Adrenal gland (tissue), 19 donors: ENCODE measurements at regions of chr5 and their contacts with region 1.

Region 1: DNA sequence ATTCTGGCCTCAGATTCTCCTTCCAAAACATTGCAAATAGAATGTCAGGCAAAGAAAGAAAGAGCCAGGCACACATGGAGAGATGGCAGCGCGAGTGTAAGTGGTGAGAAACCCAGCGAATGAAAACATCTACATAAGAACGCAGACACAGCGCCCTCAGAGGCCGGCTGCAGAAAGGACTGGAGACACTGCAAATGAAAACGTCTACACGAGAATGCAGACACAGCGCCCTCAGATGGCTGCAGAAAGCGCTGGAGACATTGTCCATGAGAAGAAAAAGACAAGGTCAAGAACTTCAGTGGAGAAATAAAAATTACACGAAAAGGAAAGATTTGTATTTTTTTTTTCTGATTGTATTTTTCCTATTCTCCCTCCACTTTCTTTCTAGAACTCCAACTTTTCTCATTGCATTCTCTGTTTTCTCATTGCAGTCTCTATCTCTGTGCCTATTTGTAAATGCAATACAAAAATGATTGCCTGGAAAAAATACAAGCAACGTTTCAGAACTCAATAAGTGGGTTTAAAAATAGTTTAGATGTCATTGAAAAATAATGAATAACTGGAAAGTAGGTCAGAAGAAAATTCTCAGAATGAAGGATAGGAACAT is 117.9 kb upstream of the LPCAT1 start:
- DNase-seq: peak; percentile 81 to 97 (median 92)
- H3K4me3 ChIP-seq: no peak overlapping the region
- H3K27ac ChIP-seq: no peak overlapping the region
- H3K4me1 ChIP-seq: no peaks in the 10 kb centered on the region
- H3K27me3 ChIP-seq: peaks cover 20% of the 10 kb centered on the region
- CTCF ChIP-seq: peak; percentile 80 to 98 (median 90)
- POLR2A ChIP-seq: no peak

Region 2: DNA sequence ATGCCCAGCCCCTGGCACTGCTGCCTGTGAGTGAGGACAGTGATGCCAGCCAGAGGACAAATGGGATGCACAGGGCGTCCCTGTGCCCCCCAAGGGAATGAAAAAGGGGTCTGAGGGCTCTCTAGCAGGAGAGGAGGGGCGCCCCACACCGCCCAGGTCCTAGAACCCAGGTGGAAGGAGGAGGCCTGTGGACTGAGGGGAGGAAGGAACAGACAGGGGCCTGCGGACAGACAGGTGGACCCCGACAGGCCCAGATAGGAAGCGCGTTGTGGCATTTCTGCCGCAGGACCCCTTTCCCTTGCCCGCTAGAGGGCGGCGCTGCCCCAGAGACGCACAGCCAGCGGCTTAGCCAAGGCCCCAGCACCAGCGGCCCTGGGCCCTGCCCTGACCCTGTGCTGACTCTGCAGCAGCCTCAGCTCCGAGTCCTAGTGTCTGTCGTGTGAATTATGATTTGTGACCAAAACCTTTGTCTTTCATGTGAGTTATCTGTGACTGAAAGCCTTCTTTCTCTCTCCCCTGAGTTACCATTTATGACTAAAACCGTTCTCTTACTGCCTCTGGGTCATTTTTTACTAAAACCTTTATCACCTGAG is 718.3 kb before region 1 on chr5:
- intact Hi-C with region 1: loop called (anchors 5 to 10 kb)
- DNase-seq: peak; percentile 83 to 90 (median 88)
- H3K4me3 ChIP-seq: no peak overlapping the region
- H3K27ac ChIP-seq: no peak overlapping the region
- H3K4me1 ChIP-seq: peaks cover 6 to 8% of the 10 kb centered on the region in 2 donors
- H3K27me3 ChIP-seq: peaks cover 7% of the 10 kb centered on the region
- CTCF ChIP-seq: peak; percentile 78 to 94 (median 88)
- POLR2A ChIP-seq: no peak

Region 3: DNA sequence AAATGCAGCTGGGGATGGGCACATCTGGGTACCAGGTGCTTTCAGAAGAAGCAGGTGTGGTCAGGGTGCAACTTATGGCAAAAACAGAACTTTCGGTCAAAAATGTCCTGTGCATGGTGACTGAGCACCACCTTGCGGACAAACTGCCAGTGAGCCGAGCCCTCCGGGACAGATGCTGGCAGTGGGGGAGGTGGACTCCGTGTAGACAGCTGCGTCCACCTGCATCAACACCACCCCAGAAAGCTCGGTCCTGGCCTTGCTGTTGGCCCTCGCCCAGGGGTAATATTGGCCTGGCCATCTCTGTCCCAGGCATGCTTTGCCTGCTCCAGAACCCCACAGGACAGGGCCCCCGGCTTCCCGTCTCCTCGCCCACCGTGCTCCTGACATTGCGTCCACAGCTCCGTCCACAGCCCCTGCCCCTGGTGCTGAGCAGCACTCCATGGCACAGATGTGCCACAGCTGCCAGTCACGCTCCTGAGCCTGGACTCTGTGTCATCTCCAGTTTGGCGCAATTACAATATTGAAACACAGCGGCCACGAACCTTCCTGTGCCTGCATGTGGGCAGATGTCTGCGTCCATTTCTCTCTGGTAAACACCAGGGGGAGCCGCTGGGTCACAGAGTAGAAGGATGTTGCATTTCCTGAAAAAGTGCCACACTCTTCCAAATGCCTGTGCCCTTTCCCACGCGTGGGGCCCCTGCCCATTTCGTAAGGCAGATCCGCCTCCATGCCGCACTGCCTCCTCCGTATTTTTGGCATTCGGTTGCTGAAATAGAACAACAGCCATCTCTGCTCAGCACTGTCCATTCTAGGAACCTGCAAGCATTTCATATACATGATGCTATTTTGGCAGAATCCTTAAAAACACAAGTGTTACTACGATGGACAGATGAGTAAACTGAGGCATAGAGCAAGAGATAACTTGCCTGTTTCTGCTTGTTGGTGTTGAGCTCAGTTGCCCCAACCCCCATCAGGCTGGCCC is 473.6 kb before region 1 on chr5:
- intact Hi-C with region 1: loop called in 1 of 2 experiments (anchors 5 kb)
- DNase-seq: peak; percentile 63 to 86 (median 83)
- H3K4me3 ChIP-seq: no peak overlapping the region
- H3K27ac ChIP-seq: no peak overlapping the region
- H3K4me1 ChIP-seq: peaks cover 0 to 4% of the 10 kb centered on the region in 2 donors
- H3K27me3 ChIP-seq: no peaks in the 10 kb centered on the region
- CTCF ChIP-seq: peak; percentile 47 to 77 (median 62)
- POLR2A ChIP-seq: no peak

Region 4: GRCh38 chr5:1176473-1177391 is 464.9 kb before region 1 on chr5:
- intact Hi-C with region 1: loop called in 1 of 2 experiments (anchors 5 kb)
- DNase-seq: peak in 1 of 7 donors; percentile 13
- H3K4me3 ChIP-seq: no peak overlapping the region
- H3K27ac ChIP-seq: no peak overlapping the region
- H3K4me1 ChIP-seq: peaks cover 0 to 4% of the 10 kb centered on the region in 2 donors
- H3K27me3 ChIP-seq: no peaks in the 10 kb centered on the region
- CTCF ChIP-seq: no peak
- POLR2A ChIP-seq: no peak

Region 5: GRCh38 chr5:1344975-1345838 is 296.5 kb before region 1 on chr5 and contains the start of gene CLPTM1L:
- intact Hi-C with region 1: loop called in 1 of 2 experiments (anchors 10 kb)
- DNase-seq: peak; percentile 84 to 91 (median 87)
- H3K4me3 ChIP-seq: peak within 1 kb of the TSS; percentile 88 to 97 (median 89)
- H3K27ac ChIP-seq: peak within 1 kb of the TSS in 4 of 5 donors; percentile 67 to 92 (median 74)
- H3K4me1 ChIP-seq: peaks cover 12 to 23% of the 10 kb centered on the region in 2 donors
- H3K27me3 ChIP-seq: no peaks in the 10 kb centered on the region
- CTCF ChIP-seq: peak in 3 of 6 experiments; percentile 24 to 46 (median 28)
- POLR2A ChIP-seq: peak; percentile 76 to 81
- total RNA-seq, gene CLPTM1L: 61.8 to 96.5 (median 87.0) TPM

Region 6: DNA sequence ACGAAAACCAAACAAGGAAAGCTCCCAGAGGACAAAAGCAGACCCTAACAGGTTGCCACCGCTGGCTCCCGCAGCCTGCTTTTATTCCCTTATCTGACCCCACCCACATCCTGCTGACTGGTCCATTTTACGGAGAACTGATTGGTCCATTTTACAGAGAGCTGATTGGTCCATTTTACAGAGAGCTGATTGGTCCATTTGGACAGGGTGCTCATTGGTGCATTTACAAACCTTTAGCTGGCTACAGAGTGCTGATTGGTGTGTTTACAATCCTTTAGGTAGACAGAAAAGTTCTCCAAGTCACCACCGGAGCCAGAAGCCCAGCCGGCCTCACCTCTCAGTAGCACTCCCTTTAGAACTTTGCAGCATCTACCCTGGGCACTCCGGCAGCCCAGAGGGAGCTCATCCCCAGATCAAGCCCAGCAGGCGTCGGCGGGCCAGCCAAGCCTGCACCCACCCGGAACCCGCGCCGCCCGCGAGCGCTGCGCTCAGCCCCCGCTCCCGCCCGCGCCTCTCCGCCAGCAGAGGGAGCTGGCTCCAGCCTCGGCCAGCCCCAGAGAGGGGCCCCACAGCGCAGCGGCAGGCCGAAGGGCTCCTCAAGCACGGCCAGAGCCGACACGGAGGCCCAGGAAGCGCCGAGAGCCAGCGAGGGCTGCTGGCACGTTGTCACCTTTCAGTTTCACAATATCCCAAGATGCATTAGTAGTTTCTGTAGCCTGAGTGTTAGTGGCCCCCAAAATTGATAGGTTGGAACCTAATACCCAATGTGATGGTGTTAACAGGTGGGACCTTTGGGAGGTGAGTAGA is 261.4 kb before region 1 on chr5:
- intact Hi-C with region 1: loop called in 1 of 2 experiments (anchors 5 kb)
- DNase-seq: peak; percentile 31 to 65 (median 51)
- H3K4me3 ChIP-seq: peak overlapping the region in 1 of 4 donors; percentile 1
- H3K27ac ChIP-seq: no peak overlapping the region
- H3K4me1 ChIP-seq: peaks cover 0 to 6% of the 10 kb centered on the region in 2 donors
- H3K27me3 ChIP-seq: peaks cover 2% of the 10 kb centered on the region
- CTCF ChIP-seq: peak in 5 of 6 experiments; percentile 53 to 78 (median 66)
- POLR2A ChIP-seq: no peak